ENCODE measurements at regions of chr2 and their contacts with region 1.

Region 1: DNA sequence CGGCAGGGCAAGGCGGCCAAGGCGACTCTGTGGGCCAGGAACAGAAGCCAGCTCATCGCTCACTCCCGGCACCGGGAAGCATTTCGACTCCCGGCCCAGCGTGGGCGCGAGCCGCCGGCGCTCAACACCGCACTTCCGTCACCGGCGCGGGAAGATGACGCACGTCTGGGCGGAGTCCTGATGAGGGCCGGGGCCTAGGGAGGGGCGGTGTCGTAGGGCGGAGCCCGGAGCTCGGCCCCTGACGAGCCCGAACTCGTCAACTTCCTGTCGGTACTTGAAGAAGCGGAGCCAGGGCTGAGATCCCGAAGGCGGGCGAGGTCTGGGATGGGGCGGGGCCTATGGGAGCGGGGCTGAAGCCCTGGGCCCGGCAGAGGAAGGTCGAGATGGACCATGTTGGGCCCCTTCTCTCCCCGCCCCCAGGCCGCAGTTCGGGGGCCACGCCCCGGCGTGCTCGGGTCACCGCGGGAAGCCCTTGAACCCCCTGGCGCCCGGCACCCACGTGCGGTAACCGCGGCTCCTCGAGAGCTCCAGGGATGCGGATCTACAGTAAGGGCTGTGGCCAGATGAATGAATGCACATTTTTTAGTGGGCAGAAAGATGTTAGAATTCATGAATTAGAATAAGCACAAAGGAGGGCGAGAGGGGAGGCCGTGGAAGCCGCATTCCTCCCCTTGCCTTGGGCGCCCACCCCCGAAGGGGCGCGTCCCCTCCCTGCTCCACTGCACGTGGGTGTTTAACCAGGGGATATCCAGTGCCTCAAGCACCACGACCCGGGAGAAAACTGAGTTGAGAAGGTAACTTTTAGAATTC is at the start of gene RNASEH1:
- DNase-seq: peak; percentile 98 to 99 (median 98)
- ATAC-seq: peak; percentile 99
- H3K4me3 ChIP-seq: peak within 1 kb of the TSS; percentile 99
- H3K27ac ChIP-seq: peak within 1 kb of the TSS; percentile 89
- H3K4me1 ChIP-seq: peaks cover 16 to 20% of the 10 kb centered on the region in 2 experiments; a peak in 4 of 5 replicates
- H3K27me3 ChIP-seq: no peaks in the 10 kb centered on the region
- CTCF ChIP-seq: no peak
- EP300 ChIP-seq: no peak; the same call in 1 of the 2 replicates
- POLR2A ChIP-seq: peak; percentile 95
- RAD21 ChIP-seq: peak in 1 of 2 experiments; percentile 15; a peak in 1 of 4 replicates
- polyA plus RNA-seq, gene RNASEH1: 27.5 to 32.7 TPM

Region 2: GRCh38 chr2:3536682-3537632 is 21.5 kb before region 1 on chr2:
- CTCF ChIA-PET with region 1: no interaction called
- POLR2A ChIA-PET with region 1: no interaction called
- in situ Hi-C with region 1: no loop called
- intact Hi-C with region 1: loop called (anchors 2 kb)
- DNase-seq: peak; percentile 75 to 83 (median 79)
- ATAC-seq: peak; percentile 93
- H3K4me3 ChIP-seq: peak overlapping the region; percentile 40
- H3K27ac ChIP-seq: peak overlapping the region; percentile 86
- H3K4me1 ChIP-seq: peaks cover 9 to 18% of the 10 kb centered on the region in 2 experiments; a peak in 4 of 5 replicates
- H3K27me3 ChIP-seq: no peaks in the 10 kb centered on the region
- CTCF ChIP-seq: peak; percentile 69 to 77 (median 70)
- EP300 ChIP-seq: no peak
- POLR2A ChIP-seq: no peak
- RAD21 ChIP-seq: peak in 1 of 2 experiments; percentile 51; a peak in 2 of 4 replicates

Region 3: DNA sequence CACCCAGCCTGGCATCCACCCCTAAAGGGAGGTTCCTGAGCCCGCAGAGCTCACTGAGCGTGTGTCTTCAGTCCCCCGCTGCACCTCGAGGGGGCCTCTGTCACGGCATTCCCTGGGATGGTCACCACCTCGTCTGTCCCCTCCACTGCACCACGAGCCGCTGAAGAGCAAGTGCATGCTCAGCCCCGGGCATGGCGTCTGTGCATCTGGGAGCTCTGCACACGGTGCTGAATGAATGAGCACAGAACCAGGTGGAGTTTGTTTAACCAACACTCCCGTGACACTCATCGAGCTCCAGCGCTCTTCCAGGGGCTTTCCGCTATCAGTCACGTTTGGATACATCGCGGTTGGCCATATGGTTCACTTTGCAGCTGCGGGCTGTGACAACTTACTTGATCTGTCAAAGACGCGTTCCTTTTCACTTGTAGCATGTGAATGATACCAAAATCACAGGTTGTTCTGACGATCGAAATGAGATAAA is 108.8 kb after region 1 on chr2:
- CTCF ChIA-PET with region 1: no interaction called
- POLR2A ChIA-PET with region 1: no interaction called
- in situ Hi-C with region 1: no loop called
- intact Hi-C with region 1: no loop called
- DNase-seq: no peak
- ATAC-seq: peak; percentile 54
- H3K4me3 ChIP-seq: no peak overlapping the region
- H3K27ac ChIP-seq: no peak overlapping the region
- H3K4me1 ChIP-seq: peaks cover 0 to 3% of the 10 kb centered on the region in 2 experiments; a peak in 1 of 5 replicates
- H3K27me3 ChIP-seq: peaks cover 41 to 59% of the 10 kb centered on the region in 2 experiments
- CTCF ChIP-seq: no peak
- EP300 ChIP-seq: no peak
- POLR2A ChIP-seq: no peak
- RAD21 ChIP-seq: no peak

Region 4: GRCh38 chr2:4190526-4190925 is 632.1 kb after region 1 on chr2:
- CTCF ChIA-PET with region 1: no interaction called
- POLR2A ChIA-PET with region 1: no interaction called
- in situ Hi-C with region 1: no loop called
- intact Hi-C with region 1: no loop called
- DNase-seq: no peak
- ATAC-seq: no peak
- H3K4me3 ChIP-seq: no peak overlapping the region
- H3K27ac ChIP-seq: no peak overlapping the region
- H3K4me1 ChIP-seq: no peaks in the 10 kb centered on the region
- H3K27me3 ChIP-seq: no peaks in the 10 kb centered on the region
- CTCF ChIP-seq: no peak
- EP300 ChIP-seq: no peak
- POLR2A ChIP-seq: no peak
- RAD21 ChIP-seq: no peak

Measured in K562 (cell line).